Right lobe of liver (tissue), 6 donors: ENCODE measurements at regions of chr11 and their contacts with region 1.

Region 1: GRCh38 chr11:19553683-19554333 is 158.8 kb upstream of the NAV2 start:
- DNase-seq: peak; percentile 79 to 84 (median 81)
- ATAC-seq: peak; percentile 63 to 70 (median 68)
- H3K4me3 ChIP-seq: no peak overlapping the region
- H3K27ac ChIP-seq: no peak overlapping the region
- H3K4me1 ChIP-seq: peaks cover 0 to 41% (median 18%) of the 10 kb centered on the region in 4 donors
- H3K27me3 ChIP-seq: no peaks in the 10 kb centered on the region
- CTCF ChIP-seq: peak; percentile 82 to 92 (median 88)
- POLR2A ChIP-seq: no peak

Region 2: DNA sequence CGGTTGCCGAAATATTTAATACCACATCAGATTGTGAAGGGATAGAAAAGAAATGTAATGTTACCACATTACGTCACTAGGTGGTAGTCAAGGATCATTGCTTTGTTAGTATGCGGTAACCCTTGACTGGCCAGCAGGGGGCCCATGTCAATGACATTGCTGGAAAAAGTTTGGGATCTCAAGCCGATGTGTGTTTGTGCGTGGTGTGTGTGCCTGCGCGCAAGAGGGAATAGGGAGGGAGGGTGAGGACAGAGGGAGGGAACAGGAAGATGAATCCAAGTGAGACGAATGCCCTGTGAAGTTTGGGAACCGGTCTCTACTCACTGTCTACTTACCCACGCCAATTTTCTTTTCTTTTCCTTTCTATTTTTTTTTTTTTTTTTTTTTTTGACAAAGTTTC is 482.6 kb before region 1 on chr11:
- intact Hi-C with region 1: loop called in 1 of 2 experiments (anchors 10 kb)
- DNase-seq: peak; percentile 74 to 79 (median 78)
- ATAC-seq: peak; percentile 98 to 100 (median 98)
- H3K4me3 ChIP-seq: no peak overlapping the region
- H3K27ac ChIP-seq: no peak overlapping the region
- H3K4me1 ChIP-seq: no peaks in the 10 kb centered on the region
- H3K27me3 ChIP-seq: no peaks in the 10 kb centered on the region
- CTCF ChIP-seq: peak; percentile 91 to 95 (median 92)
- POLR2A ChIP-seq: no peak

Region 3: GRCh38 chr11:19311308-19312030 is 242.3 kb before region 1 on chr11:
- intact Hi-C with region 1: loop called (anchors 5 kb)
- DNase-seq: peak; percentile 53 to 75 (median 61)
- ATAC-seq: peak; percentile 93 to 97 (median 95)
- H3K4me3 ChIP-seq: no peak overlapping the region
- H3K27ac ChIP-seq: no peak overlapping the region
- H3K4me1 ChIP-seq: no peaks in the 10 kb centered on the region
- H3K27me3 ChIP-seq: no peaks in the 10 kb centered on the region
- CTCF ChIP-seq: peak; percentile 80 to 90 (median 86)
- POLR2A ChIP-seq: no peak